ENCODE measurements at regions of chr5 and their contacts with region 1.

Region 1: DNA sequence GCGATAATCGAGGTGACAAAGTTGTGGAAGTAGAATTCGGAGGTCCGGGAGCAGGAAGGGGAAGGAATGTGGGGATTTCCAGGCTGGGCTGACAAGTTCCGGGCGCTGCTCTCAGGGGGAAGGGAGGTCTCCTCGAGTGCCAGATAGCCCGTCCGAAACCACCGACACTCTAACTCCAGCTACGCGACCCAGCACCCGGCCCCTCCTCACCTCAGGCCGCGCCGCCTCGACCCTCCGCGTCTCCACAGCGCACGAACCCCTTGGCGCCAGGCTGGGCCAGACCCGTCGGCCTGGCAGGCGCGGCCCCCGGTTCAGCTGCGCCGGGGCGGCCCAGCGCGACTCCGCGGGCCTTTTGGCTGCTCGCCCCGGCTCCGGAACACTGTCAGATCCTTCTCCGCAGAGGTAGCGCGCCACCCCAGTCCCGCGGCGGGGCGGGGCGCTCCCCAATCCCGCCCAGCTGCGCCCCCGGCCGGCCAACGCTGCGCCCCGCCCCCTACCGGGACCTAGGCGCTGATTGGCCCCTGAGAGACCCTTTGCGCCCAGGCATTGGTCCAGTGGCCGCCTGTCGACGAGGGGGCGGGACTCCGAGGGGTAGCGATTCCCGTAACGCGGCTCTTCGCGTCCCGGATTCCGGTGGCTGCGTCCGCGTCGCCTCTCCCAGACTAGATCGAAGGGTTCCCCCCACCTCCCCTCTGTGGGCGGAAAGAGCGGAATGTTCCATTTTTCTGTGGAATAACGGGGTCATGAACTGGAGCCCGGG is at the start of gene IL6ST:
- DNase-seq: peak; percentile 99
- ATAC-seq: peak; percentile 99
- total RNA-seq, gene IL6ST: 145 TPM

Region 2: DNA sequence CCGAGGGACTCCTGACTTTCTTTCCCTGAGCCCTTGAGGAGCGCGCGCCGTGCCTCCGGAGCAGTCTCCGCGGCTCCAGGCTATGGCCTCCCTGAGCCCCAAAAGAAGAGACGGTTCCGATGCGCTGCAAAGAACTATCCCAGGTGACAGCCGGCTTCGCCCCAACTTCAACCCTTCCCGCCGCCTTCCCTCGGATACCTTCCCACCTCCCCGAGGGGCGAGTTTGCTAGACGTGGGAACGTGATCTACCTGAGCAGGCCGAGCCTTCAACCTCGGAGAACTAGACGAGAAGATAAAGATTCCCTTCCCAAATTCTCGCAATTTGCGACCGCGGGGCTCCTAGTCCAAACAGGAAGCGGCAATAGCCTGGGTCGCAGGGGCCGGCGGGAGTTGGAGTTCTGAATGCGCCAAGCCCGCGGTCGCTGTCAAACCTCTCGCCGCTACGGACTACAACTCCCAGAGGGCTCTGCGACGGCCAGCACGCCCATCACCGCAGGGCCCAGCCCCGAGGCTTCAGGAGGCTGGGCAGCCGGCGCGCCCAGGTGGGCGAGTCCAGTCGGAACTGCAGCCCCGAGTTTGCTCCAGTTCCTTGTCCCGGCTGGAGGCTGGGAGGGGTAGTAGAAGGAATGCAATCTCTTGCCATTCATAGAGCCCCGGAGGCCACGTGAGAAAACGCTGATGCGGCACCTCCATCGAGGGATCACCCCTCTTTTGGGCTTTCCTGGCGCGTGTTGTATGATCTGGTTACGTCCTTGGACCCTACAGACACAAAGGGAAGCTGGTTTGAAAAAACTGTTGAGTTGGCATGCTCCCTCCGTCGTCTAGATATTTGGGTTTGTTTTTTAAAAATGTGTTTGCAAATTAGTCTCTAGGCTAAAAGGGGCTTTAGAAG is 282.5 kb before region 1 on chr5 and contains the start of gene SLC38A9:
- intact Hi-C with region 1: loop called (anchors 5 kb)
- DNase-seq: peak; percentile 98
- ATAC-seq: peak; percentile 100
- total RNA-seq, gene SLC38A9: 7.9 TPM

Region 3: GRCh38 chr5:55868846-55869245 is 125.9 kb before region 1 on chr5:
- intact Hi-C with region 1: no loop called
- DNase-seq: no peak
- ATAC-seq: no peak

Region 4: GRCh38 chr5:56037531-56038010 is 42.8 kb after region 1 on chr5:
- intact Hi-C with region 1: loop called (anchors 2 kb)
- DNase-seq: no peak
- ATAC-seq: peak; percentile 48

Region 5: GRCh38 chr5:56175488-56175887 is 180.7 kb after region 1 on chr5:
- intact Hi-C with region 1: loop called (anchors 10 kb)
- DNase-seq: no peak
- ATAC-seq: peak; percentile 67

Region 6: DNA sequence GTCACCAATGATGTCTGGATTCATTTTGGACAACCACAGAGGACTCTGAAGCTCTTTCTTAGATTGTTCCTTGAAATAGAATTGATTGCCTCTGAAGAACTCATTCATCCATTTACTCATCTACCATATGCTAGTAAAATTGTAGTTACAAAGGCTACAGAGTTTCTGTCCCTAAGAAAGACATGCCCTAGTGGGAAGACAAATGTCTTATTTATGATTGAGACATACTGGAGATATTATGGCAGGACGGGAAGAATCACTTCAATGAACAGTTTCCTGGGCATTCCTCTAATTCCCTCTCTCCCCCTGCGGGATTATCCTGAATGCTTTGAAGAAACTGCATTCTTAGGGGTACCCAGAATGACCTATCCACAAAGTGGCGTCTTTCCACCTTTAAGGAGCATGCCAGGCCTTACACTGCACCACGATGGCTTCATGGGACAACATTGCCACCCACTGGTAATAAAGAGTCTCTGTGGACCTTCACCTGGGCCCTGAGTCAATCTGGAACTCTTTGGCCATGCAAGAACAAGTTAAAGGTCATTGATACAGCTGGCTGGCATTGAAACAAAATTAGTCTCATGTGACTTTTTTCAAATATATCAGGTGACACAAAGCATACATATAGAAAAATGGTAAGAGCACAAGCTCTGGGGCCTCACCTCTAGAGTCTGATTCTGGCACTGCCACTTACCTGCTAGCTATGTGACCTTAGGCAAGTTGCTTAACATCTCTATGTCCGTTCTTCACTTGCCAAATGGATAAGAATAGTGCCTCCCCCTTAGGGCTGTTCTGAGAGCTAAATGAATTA is 206.3 kb after region 1 on chr5:
- intact Hi-C with region 1: loop called (anchors 5 kb)
- DNase-seq: no peak
- ATAC-seq: peak; percentile 97